Activated CD8-positive, alpha-beta T cell treated with anti-CD3 and anti-CD28 coated beads, Interleukin-2, amount 10 ng/mL, durations not matched to agents 7 days and 5 days (primary cell): ENCODE measurements at regions of chr1 and their contacts with region 1.

Region 1: DNA sequence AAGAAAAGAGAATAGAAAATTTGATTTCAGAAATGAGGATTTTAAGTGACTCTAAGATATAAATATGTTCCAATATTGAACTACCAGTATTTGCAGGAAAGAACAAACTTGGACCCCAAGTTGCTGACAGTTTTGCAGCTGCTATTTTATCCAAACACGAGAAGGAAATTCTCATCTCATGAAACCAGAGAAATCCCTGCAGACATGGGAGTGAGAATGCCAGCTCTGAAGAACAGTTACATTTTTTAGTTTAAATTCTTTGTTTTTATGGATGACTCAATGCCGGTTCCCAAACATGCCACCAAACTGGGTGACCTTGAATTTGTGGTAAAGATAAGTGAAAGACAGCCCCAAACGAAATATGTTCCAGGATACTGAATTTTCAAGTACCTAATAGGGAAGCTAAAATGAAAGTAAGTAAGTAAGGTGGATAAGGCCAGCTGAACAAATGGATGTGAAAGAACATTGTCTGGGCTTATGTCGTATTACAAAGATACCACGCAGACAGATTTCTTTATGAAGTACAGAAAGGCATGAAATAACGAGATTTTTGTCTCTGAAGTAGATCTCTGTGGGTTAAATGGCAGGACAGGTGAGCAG is 19.9 kb downstream of the TLR5 start:
- DNase-seq: no peak
- ATAC-seq: no peak
- H3K4me3 Mint-ChIP-seq: no peak overlapping the region
- H3K27ac Mint-ChIP-seq: no peak overlapping the region
- H3K4me1 Mint-ChIP-seq: peaks cover 5% of the 10 kb centered on the region
- H3K27me3 Mint-ChIP-seq: no peaks in the 10 kb centered on the region

Region 2: DNA sequence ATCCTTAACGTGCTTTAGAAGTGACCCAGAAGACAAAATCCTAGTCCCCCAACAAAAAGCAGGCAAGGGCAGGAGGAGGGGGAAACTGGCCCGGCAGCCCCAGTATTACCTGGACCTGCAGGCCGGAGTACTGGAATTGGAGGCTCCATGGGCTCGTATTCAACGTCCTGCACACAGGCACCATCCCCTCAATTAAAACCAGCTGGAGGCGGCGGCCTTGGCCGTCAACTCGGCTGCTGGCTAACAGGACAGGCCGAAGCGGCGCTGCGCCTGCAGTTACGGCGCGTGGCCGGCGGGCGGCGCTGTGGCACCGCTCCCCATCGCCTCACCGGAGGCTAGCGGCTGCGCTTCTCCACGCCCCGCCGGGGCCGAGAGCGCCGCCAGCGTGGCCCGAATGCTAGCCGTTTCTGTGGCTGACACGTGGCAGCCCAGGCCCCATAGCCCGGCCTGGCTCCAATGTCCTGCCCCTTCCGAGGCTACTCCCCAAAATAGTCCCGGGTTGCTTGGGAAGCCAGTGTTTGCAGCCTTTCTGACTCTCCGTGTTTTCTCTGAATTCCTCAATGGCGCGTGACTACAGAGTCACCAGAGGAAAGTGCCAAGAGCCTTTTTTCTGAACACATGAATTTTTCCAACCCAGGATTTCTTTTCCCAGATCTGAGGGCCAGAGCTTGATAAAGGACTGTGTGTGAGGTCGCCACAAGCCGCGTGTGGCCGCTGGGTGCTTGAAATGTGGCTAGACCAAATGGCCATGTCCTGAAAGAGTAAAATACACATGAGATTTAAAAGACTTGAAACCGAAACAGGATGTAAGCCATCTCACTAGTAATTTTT is 657.7 kb before region 1 on chr1:
- CTCF ChIA-PET with region 1: interaction called, 12 read pairs
- POLR2A ChIA-PET with region 1: no interaction called
- DNase-seq: peak; percentile 83
- ATAC-seq: peak; percentile 96
- H3K4me3 Mint-ChIP-seq: peak overlapping the region; percentile 73
- H3K27ac Mint-ChIP-seq: peak overlapping the region; percentile 87
- H3K4me1 Mint-ChIP-seq: peaks cover 13% of the 10 kb centered on the region
- H3K27me3 Mint-ChIP-seq: peaks cover 6% of the 10 kb centered on the region

Region 3: DNA sequence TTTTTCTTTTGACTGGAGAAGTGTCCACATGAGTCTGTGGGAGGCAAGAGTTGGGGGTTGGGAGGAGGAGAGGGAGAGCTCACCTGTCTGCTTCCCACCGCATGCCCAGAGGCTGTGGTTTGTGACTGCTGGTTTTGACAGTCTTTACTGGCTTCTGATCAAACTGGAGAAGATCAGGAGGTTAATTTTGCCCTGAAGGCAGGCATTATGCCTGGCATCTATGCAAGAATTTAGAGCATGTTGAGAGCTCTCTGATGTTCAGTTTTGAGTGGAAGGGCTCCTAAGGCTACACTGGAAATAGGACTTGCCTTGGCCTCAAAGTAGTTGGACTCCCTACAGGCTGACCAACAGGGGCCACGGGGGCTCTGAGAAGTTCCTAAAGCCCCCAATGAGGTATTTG is 81.6 kb before region 1 on chr1:
- CTCF ChIA-PET with region 1: no interaction called
- POLR2A ChIA-PET with region 1: no interaction called
- DNase-seq: no peak
- ATAC-seq: no peak
- H3K4me3 Mint-ChIP-seq: no peak overlapping the region
- H3K27ac Mint-ChIP-seq: no peak overlapping the region
- H3K4me1 Mint-ChIP-seq: no peaks in the 10 kb centered on the region
- H3K27me3 Mint-ChIP-seq: peaks cover 7% of the 10 kb centered on the region

Region 4: DNA sequence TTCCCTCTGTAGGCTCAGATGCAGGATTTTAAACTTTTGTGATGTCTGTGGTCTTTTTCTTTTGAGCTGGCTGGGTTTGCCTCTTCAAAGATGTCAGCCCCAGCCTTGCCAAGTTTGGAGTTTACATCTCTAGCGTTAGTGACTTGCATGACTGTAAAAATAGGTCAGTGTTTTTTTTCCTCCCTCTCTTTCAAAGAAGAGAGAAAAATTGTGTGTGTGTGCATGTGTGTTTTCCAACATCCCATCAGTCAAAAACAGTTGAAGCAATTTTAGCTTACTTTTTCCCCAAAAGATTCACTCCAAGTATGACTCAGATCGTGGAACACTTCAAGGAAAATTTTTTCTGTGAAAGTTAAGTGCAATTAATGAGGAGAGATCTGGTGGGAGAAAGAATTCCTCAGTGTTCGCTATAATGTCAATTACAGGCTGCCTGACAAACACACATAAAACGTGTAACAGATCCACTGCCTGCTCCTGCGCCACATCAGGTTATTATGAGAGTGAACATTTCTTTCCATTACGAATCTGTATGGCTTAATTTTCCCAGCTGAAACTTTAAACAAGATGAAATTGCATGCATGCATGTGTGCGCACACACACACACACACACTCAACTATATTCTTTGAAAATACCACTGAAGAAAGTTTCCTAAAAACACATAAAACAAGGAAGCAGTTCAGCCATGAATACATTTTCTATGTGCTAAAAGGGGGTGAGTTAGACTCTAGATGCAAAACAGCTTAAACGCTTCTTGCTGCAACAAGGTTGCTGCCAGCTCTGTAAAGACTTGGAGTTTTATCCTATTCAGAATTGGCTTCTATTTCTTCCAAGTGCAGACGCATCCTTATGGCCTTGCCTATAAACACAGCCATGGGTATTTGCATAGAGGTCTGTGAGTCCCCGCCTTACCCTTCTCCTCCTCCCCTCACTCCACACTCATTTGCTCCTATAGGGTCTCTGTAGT is 35.5 kb before region 1 on chr1:
- CTCF ChIA-PET with region 1: interaction called, 14 read pairs
- POLR2A ChIA-PET with region 1: no interaction called
- DNase-seq: no peak
- ATAC-seq: no peak
- H3K4me3 Mint-ChIP-seq: no peak overlapping the region
- H3K27ac Mint-ChIP-seq: no peak overlapping the region
- H3K4me1 Mint-ChIP-seq: peaks cover 6% of the 10 kb centered on the region
- H3K27me3 Mint-ChIP-seq: no peaks in the 10 kb centered on the region

Region 5: GRCh38 chr1:223102797-223103533 is 20.1 kb before region 1 on chr1:
- CTCF ChIA-PET with region 1: interaction called, 12 read pairs
- POLR2A ChIA-PET with region 1: no interaction called
- DNase-seq: no peak
- ATAC-seq: no peak
- H3K4me3 Mint-ChIP-seq: no peak overlapping the region
- H3K27ac Mint-ChIP-seq: no peak overlapping the region
- H3K4me1 Mint-ChIP-seq: no peaks in the 10 kb centered on the region
- H3K27me3 Mint-ChIP-seq: peaks cover 6% of the 10 kb centered on the region

Region 6: DNA sequence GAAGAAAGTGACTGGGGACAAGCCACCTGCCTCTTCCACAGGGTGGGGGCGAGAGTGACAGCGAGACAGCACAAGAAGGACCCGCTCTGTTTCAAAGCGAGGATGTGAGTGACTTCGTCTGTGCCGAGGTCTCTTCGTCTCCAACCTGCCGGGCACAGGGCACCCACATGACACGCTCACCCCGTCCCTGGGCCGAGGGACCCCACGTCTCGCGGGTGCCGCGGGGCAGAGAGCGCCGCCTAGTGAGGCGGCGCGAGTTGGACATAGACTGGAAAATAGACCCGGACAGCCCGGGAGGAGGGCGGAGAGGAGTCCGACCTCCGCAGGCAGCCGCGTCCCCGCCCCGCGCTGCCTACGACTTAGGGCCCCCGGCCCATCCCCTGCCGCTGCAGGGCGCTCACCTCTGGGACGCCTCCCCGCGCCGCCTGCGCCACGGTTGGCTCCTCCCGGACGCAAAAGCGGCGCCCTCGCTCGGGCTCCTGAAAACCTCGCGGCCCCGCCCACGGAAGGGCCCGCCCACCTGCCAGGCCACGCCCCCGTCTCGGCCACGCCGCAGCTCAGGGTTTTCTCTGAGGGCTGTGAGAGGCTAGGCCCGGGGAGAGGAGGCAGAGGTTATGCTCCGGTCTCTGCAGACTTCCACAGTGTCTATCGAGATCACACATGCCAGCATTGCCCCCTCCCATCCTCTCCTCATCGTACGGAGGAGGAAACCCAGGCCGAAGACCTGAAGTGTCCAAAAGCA is 19.9 kb after region 1 on chr1 and contains the start of gene TLR5:
- CTCF ChIA-PET with region 1: interaction called, 100 read pairs
- POLR2A ChIA-PET with region 1: no interaction called
- DNase-seq: peak; percentile 89
- ATAC-seq: peak; percentile 94
- H3K4me3 Mint-ChIP-seq: peak within 1 kb of the TSS; percentile 68
- H3K27ac Mint-ChIP-seq: peak within 1 kb of the TSS; percentile 50
- H3K4me1 Mint-ChIP-seq: peaks cover 10% of the 10 kb centered on the region
- H3K27me3 Mint-ChIP-seq: peaks cover 12% of the 10 kb centered on the region
- total RNA-seq, gene TLR5: 0.32 to 0.44 TPM

Region 7: DNA sequence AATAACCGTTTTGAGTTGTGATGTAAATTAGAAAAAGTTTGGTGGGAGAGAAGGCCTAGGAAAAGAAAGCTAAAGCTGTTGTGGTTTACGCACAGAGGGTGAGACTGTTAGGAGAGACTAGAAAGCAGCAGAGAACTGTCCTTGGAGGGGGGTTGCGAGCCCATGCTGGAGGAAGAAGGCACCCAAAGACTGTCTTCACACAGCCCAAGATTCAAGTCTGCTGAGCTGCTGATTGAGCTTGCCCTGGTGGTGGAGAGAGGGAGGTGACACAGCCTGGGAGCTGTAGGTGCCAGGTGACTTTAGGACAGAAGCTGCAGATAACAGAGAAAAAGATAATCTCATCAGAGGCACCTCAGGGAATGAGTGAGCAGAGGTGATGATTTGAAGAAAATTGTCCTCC is 38.2 kb after region 1 on chr1:
- CTCF ChIA-PET with region 1: interaction called, 11 read pairs
- POLR2A ChIA-PET with region 1: no interaction called
- DNase-seq: no peak
- ATAC-seq: peak; percentile 30
- H3K4me3 Mint-ChIP-seq: no peak overlapping the region
- H3K27ac Mint-ChIP-seq: no peak overlapping the region
- H3K4me1 Mint-ChIP-seq: peaks cover 6% of the 10 kb centered on the region
- H3K27me3 Mint-ChIP-seq: no peaks in the 10 kb centered on the region

Region 8: GRCh38 chr1:223256034-223256433 is 132.9 kb after region 1 on chr1:
- CTCF ChIA-PET with region 1: interaction called, 11 read pairs
- POLR2A ChIA-PET with region 1: no interaction called
- DNase-seq: no peak
- ATAC-seq: no peak
- H3K4me3 Mint-ChIP-seq: no peak overlapping the region
- H3K27ac Mint-ChIP-seq: no peak overlapping the region
- H3K4me1 Mint-ChIP-seq: no peaks in the 10 kb centered on the region
- H3K27me3 Mint-ChIP-seq: peaks cover 6% of the 10 kb centered on the region

Region 9: DNA sequence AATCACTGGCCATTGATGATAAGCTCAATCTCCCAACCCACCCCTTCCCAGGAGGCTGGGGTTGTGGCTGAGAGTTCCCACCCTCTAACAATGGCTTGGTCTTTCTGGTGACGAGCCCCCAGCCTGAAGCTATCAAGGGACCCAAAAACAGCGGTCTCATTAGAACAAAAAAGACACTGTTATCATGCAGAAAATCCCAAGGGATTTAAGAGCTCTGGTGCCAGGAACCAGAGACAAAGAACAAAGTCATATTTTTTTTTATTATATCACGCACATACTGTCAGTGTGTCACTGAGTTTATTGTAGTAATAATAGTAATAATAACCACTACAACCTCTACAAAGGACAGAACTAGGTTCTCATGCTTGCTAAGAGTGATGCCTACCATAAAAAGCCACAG is 314.0 kb after region 1 on chr1:
- CTCF ChIA-PET with region 1: no interaction called
- POLR2A ChIA-PET with region 1: no interaction called
- DNase-seq: no peak
- ATAC-seq: no peak
- H3K4me3 Mint-ChIP-seq: no peak overlapping the region
- H3K27ac Mint-ChIP-seq: no peak overlapping the region
- H3K4me1 Mint-ChIP-seq: no peaks in the 10 kb centered on the region
- H3K27me3 Mint-ChIP-seq: no peaks in the 10 kb centered on the region